ENCODE measurements at regions of chr6 and their contacts with region 1.

Region 1: DNA sequence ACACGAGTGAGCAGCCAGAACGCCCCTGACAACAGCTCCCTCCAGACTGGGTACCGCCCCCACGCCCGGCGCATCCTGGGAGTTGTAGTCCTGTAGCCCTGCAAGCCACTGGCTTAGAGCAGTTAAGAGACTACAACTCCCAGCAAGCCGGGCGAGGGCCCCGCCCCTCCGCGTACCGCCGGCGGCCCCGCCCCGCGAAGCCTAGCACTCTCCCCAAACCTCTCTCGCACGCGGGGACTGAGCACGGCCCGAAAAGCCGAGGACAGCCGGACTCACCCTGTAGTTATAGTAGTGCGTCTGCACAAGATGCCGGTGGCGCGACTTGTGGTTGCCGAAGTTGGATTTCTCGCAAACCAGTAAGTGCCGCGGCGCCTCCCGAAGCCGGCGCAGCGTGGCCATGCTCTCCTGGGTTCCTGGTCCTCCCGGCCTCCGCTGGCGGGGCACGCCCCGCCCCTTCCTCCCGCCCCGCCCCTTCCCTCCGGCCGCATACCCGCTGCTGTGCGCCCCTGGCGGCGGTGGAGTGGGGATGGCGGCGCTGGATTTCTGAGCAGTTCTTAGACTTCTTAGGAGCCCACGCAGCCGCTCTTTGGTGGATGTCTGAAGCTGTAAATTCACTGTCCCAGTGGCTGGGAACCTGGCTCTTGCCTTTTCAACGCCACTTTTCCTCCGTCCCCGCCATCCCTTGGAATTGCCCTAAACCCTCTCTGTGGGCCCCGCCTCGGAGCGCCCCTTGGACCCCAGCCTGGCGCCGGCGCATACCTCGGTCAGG is at the start of gene RPP40:
- DNase-seq: peak; percentile 97 to 99 (median 99)
- ATAC-seq: peak; percentile 97
- H3K4me3 ChIP-seq: peak within 1 kb of the TSS; percentile 91
- H3K4me3 Mint-ChIP-seq: peak within 1 kb of the TSS; percentile 88 to 95 (median 94)
- H3K27ac ChIP-seq: peak within 1 kb of the TSS; percentile 82
- H3K27ac Mint-ChIP-seq: peak within 1 kb of the TSS; percentile 91 to 98 (median 94)
- H3K4me1 ChIP-seq: peaks cover 9% of the 10 kb centered on the region in 2 donors
- H3K4me1 Mint-ChIP-seq: peaks cover 0 to 20% (median 13%) of the 10 kb centered on the region in 7 donors
- H3K27me3 ChIP-seq: no peaks in the 10 kb centered on the region
- H3K27me3 Mint-ChIP-seq: no peaks in the 10 kb centered on the region
- total RNA-seq, gene RPP40: 3.8 to 8.0 (median 5.1) TPM

Region 2: DNA sequence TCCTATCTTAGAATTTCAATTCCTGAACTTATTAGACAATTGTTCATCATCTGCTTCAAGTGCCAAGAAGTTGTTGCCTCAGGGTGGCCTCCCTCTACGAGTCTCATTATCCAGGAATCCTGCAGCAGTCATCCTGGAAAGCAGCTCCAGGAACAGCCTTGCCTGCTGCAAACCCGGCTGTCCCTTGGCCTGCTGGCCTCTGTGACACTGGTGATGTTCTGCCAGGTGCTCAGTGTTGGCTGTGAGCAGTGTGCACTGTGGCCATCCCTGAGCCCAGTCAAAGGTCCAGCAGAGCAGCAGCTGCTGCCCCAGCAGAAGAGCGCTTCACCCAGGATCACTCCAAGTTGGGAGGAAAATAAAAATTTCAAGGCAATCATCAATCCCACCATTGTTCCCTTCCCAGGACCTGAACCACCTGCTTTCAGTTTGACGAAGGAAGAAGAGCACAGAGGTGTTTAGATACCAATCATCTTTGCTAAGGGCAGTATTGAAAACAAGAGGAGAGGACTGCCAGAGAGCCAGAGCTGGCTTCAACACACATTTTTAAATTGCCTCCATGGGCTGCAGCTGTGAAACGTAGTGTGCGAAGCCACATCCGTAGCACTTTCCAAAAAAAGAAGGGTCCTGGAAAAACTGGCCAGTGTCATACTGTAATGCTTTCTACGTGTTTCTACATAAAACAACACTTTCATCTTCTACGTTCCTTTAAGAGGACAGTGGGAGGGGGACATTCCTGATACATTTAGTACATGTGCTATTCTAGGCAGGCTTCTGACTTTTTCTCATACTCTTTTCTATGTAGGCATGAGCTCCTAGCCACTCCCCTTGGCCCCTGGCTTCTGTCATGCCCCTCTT is 1161.8 kb before region 1 on chr6:
- CTCF ChIA-PET with region 1: no interaction called
- POLR2A ChIA-PET with region 1: no interaction called
- intact Hi-C with region 1: no loop called
- DNase-seq: no peak
- ATAC-seq: no peak
- H3K4me3 ChIP-seq: no peak overlapping the region
- H3K4me3 Mint-ChIP-seq: no peak overlapping the region
- H3K27ac ChIP-seq: no peak overlapping the region
- H3K27ac Mint-ChIP-seq: no peak overlapping the region
- H3K4me1 ChIP-seq: no peaks in the 10 kb centered on the region
- H3K4me1 Mint-ChIP-seq: peaks cover 0 to 2% (median 0%) of the 10 kb centered on the region in 7 donors
- H3K27me3 ChIP-seq: no peaks in the 10 kb centered on the region
- H3K27me3 Mint-ChIP-seq: peaks cover 0 to 24% (median 0%) of the 10 kb centered on the region in 5 donors

Region 3: GRCh38 chr6:5030596-5031136 is 26.9 kb after region 1 on chr6:
- CTCF ChIA-PET with region 1: interaction called, 3 read pairs
- POLR2A ChIA-PET with region 1: no interaction called
- intact Hi-C with region 1: loop called (anchors 1 kb)
- DNase-seq: peak; percentile 15 to 68 (median 43)
- ATAC-seq: peak; percentile 90
- H3K4me3 ChIP-seq: no peak overlapping the region
- H3K4me3 Mint-ChIP-seq: peak overlapping the region in 1 of 10 donors; percentile 22
- H3K27ac ChIP-seq: no peak overlapping the region
- H3K27ac Mint-ChIP-seq: peak overlapping the region in 1 of 9 donors; percentile 3
- H3K4me1 ChIP-seq: peaks cover 0 to 4% of the 10 kb centered on the region in 2 donors
- H3K4me1 Mint-ChIP-seq: peaks cover 10 to 27% (median 14%) of the 10 kb centered on the region in 7 donors
- H3K27me3 ChIP-seq: no peaks in the 10 kb centered on the region
- H3K27me3 Mint-ChIP-seq: peaks cover 0 to 7% (median 4%) of the 10 kb centered on the region in 5 donors

Region 4: DNA sequence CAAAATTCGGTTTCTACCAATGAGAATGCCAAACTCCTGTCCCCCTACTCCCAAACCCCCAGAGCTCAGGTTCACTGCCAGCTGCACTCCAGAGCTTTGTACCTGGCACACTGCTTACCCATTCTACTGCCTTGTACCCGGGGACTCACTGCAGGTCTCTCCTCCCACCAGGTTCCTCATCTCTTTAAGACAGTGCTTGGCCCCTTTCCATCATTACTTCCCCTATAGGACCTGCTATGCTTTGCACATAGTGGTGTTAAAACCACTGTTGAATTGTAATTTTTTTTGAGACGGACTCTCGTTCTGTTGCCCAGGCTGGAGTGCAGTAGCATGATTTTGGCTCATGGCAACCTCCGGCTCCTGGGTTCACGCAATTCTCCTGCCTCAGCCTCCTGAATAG is 231.1 kb after region 1 on chr6:
- CTCF ChIA-PET with region 1: no interaction called
- POLR2A ChIA-PET with region 1: no interaction called
- intact Hi-C with region 1: no loop called
- DNase-seq: no peak
- ATAC-seq: peak; percentile 64
- H3K4me3 ChIP-seq: no peak overlapping the region
- H3K4me3 Mint-ChIP-seq: no peak overlapping the region
- H3K27ac ChIP-seq: no peak overlapping the region
- H3K27ac Mint-ChIP-seq: peak overlapping the region in 1 of 9 donors; percentile 57
- H3K4me1 ChIP-seq: no peaks in the 10 kb centered on the region
- H3K4me1 Mint-ChIP-seq: peaks cover 0 to 2% (median 0%) of the 10 kb centered on the region in 7 donors
- H3K27me3 ChIP-seq: no peaks in the 10 kb centered on the region
- H3K27me3 Mint-ChIP-seq: no peaks in the 10 kb centered on the region